Activated T-helper 1 cell treated with anti-CD3 and anti-CD28 coated beads, Interleukin-12 subunit alpha, Interleukin-12 subunit beta, Interleukin-2, Interleukin-4 antibody, amounts not matched to agents 30 ng/mL and 10 ng/mL and 1 ng/mL, durations not matched to agents 14 hours and 24 hours and 36 hours (primary cell): ENCODE measurements at regions of chr1 and their contacts with region 1.

Region 1: DNA sequence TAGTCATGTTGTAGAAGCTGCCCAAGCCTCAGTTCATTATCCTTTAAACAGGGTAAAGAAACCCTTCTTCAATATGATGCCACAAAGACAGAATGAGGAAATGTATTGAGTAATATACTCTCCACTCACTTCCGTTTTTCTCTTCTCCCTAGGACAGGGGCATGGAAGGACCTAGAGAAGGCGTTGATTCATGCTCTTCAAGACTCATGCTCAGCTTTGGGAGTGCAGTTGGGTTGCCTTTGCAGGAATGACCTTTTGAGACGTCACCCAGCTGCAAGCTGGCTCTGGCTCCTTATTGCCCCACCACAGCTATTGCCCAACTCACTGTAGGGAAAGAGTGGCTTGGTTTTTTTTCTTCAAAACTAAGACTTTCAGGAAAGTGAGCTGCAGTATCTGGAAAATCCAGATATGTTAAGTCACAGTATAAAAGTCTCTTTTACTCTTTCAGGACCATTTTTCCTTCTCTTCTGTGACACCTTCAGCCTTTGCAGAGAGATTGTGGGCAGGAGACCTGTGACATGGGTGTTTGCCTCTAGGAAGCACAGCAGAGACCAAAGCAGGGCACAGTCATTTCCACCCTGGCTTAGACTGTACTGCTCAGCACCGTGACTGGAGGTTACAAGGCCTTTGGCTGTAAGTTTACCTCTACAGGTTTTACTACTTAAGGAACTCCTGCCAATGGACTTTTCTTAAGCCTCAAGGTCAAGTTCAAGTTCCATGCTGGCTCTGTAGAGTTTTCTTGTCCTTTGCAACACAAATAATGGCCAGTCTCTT is 39.5 kb downstream of the XCL2 start:
- DNase-seq: no peak
- H3K4me3 Mint-ChIP-seq: peak overlapping the region; percentile 0
- H3K27ac Mint-ChIP-seq: peak overlapping the region; percentile 4
- H3K4me1 Mint-ChIP-seq: peaks cover 69% of the 10 kb centered on the region
- H3K27me3 Mint-ChIP-seq: peaks cover 1% of the 10 kb centered on the region

Region 2: DNA sequence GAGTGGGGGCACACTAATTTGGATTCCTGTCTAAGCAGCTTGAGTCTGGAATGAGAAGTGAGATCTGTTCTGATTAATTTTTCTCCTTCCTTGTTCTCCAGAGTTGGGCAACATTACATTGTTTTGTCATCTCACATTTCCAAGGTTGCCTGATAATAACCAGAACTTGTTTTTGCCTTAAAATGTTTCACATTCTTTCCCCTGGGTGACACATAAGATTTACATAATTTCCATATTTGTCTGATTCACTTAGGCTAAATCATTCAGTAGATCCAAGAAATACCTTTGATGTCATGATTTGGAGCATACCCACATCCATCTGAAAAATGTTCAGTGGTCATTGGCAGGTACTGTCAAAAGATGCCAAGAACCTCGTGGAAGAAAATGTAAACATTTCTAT is 20.7 kb before region 1 on chr1:
- intact Hi-C with region 1: loop called (anchors 2 kb)
- DNase-seq: no peak
- H3K4me3 Mint-ChIP-seq: no peak overlapping the region
- H3K27ac Mint-ChIP-seq: no peak overlapping the region
- H3K4me1 Mint-ChIP-seq: peaks cover 45% of the 10 kb centered on the region
- H3K27me3 Mint-ChIP-seq: no peaks in the 10 kb centered on the region